ENCODE measurements at regions of chr2 and their contacts with region 1.

Region 1: DNA sequence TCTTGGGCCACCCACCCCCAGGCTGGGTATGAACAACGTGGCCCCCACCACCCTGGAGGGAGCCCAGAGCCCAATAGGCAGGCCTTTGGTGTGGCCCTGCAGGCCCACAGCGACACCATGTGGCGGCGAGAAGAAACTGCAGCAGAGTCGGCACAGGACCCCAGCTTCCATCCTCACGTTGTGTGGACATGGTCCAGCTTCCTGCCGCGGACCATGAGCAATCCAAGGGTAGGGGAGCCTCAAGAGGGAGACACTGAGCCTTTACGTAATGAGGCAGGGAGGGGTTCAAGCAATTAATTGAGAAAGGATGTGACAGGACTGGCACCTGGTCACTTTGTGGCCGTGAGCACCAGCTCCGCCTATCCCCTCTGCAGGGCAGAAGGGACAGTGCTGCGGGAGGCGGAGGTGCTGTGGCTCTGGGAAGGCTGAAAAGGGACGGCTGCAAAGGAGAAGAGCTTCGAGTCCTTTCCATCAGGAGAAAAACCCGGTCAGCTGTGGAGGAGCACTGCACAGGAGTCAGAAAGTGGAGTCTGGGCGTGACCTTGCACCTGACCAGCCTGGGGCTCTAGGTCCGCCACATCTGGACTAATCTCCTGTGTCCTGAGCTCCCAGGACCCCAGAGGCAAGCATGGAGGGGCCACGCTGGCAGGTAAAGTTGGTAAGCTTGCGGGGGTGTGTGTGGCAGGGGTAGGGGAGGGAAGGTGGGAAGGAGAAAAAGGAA is 44.8 kb downstream of the TMEM37 start:
- DNase-seq: no peak
- H3K4me3 ChIP-seq: no peak overlapping the region
- H3K27ac ChIP-seq: no peak overlapping the region
- H3K4me1 ChIP-seq: no peaks in the 10 kb centered on the region
- H3K27me3 ChIP-seq: peaks cover 0 to 3% of the 10 kb centered on the region in 2 donors
- CTCF ChIP-seq: peak; percentile 78 to 89 (median 81)
- POLR2A ChIP-seq: no peak

Region 2: GRCh38 chr2:119407430-119408220 is 68.8 kb before region 1 on chr2:
- intact Hi-C with region 1: loop called (anchors 5 kb)
- DNase-seq: no peak
- H3K4me3 ChIP-seq: no peak overlapping the region
- H3K27ac ChIP-seq: peak overlapping the region in 1 of 2 donors; percentile 43
- H3K4me1 ChIP-seq: no peaks in the 10 kb centered on the region
- H3K27me3 ChIP-seq: no peaks in the 10 kb centered on the region
- CTCF ChIP-seq: peak; percentile 77 to 90 (median 86)
- POLR2A ChIP-seq: no peak

Region 3: GRCh38 chr2:119431976-119432850 is 44.2 kb before region 1 on chr2:
- intact Hi-C with region 1: no loop called
- DNase-seq: no peak
- H3K4me3 ChIP-seq: peak overlapping the region; percentile 54 to 66 (median 60)
- H3K27ac ChIP-seq: peak overlapping the region; percentile 43 to 64
- H3K4me1 ChIP-seq: no peaks in the 10 kb centered on the region
- H3K27me3 ChIP-seq: no peaks in the 10 kb centered on the region
- CTCF ChIP-seq: no peak
- POLR2A ChIP-seq: no peak

Region 4: DNA sequence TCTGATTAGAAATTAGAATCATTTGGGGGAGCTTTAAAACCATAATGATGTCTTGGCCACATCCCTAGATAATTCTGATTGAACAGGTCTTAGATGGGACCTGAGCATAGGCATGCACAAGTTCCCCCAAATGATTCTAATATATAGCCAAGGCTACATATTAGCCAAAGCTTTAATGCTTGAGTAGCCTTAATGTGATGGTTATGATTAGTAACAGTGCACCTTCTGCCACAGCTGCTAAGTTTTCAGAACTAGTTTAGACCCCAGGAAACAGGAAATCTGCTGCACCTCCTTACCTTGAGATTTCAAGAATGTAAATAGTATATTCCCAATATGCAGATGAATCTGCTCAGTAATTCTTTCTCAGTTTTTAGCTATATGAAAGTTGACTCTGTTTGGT is 403.0 kb after region 1 on chr2:
- intact Hi-C with region 1: no loop called
- DNase-seq: no peak
- H3K4me3 ChIP-seq: no peak overlapping the region
- H3K27ac ChIP-seq: no peak overlapping the region
- H3K4me1 ChIP-seq: no peaks in the 10 kb centered on the region
- H3K27me3 ChIP-seq: no peaks in the 10 kb centered on the region
- CTCF ChIP-seq: no peak
- POLR2A ChIP-seq: no peak

Region 5: GRCh38 chr2:120037995-120038541 is 561.6 kb after region 1 on chr2:
- intact Hi-C with region 1: no loop called
- DNase-seq: no peak
- H3K4me3 ChIP-seq: no peak overlapping the region
- H3K27ac ChIP-seq: no peak overlapping the region
- H3K4me1 ChIP-seq: no peaks in the 10 kb centered on the region
- H3K27me3 ChIP-seq: no peaks in the 10 kb centered on the region
- CTCF ChIP-seq: no peak
- POLR2A ChIP-seq: no peak

Region 6: DNA sequence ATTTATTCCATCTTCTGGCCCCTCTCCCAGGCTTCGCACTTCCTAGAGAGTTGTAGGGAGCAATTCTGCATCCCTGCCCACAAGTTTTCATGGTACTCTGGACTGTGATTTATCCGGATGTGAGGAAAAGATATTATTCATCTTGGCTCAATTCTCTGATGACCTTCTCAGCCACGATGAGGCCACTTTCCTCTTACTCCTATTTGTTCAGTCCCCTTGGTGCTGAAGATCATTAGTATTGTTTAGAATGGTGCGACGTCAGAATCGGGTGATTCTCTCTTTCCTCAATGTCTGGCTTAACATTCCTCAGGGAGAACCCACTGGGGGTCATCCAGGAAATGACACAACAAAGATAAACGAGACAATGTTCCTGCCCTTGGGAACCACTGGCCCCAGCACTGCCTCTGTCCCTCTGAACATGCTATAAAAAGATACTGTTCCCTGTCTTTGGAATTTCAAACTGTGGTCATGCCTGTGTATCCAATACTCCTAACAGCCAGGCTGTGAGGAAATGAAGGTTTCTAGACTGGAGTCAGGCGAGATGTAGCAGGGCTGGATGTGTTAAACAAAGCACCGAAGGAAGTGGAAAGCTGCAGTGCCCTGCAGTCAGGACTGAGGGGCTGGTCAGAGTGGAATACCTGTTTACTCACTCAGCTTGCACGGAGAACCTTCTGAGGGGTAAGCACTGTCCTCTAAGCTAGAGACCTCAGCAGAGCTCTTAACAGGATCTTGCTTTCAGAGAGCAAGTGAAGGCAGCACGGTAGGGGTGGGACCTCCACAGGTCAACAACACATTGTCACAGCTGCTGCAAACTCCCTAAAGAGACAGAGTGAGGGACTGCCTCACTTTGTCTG is 1246.3 kb after region 1 on chr2:
- intact Hi-C with region 1: no loop called
- DNase-seq: no peak
- H3K4me3 ChIP-seq: no peak overlapping the region
- H3K27ac ChIP-seq: no peak overlapping the region
- H3K4me1 ChIP-seq: no peaks in the 10 kb centered on the region
- H3K27me3 ChIP-seq: no peaks in the 10 kb centered on the region
- CTCF ChIP-seq: no peak
- POLR2A ChIP-seq: no peak